Ovary (tissue), 10 donors: ENCODE measurements at regions of chr10 and their contacts with region 1.

Region 1: GRCh38 chr10:79463578-79464496 is 18.4 kb upstream of the ZCCHC24 start:
- DNase-seq: no peak
- H3K4me3 ChIP-seq: no peak overlapping the region
- H3K27ac ChIP-seq: no peak overlapping the region
- H3K4me1 ChIP-seq: peaks cover 3% of the 10 kb centered on the region
- H3K27me3 ChIP-seq: no peaks in the 10 kb centered on the region
- CTCF ChIP-seq: no peak
- EP300 ChIP-seq: no peak
- POLR2A ChIP-seq: no peak

Region 2: GRCh38 chr10:79242620-79243152 is 221.2 kb before region 1 on chr10:
- intact Hi-C with region 1: loop called in 1 of 4 experiments (anchors 10 kb)
- DNase-seq: peak; percentile 74 to 85 (median 77)
- H3K4me3 ChIP-seq: peak overlapping the region; percentile 39
- H3K27ac ChIP-seq: peak overlapping the region; percentile 42 to 74
- H3K4me1 ChIP-seq: peaks cover 42% of the 10 kb centered on the region
- H3K27me3 ChIP-seq: no peaks in the 10 kb centered on the region
- CTCF ChIP-seq: no peak
- EP300 ChIP-seq: no peak
- POLR2A ChIP-seq: no peak

Region 3: DNA sequence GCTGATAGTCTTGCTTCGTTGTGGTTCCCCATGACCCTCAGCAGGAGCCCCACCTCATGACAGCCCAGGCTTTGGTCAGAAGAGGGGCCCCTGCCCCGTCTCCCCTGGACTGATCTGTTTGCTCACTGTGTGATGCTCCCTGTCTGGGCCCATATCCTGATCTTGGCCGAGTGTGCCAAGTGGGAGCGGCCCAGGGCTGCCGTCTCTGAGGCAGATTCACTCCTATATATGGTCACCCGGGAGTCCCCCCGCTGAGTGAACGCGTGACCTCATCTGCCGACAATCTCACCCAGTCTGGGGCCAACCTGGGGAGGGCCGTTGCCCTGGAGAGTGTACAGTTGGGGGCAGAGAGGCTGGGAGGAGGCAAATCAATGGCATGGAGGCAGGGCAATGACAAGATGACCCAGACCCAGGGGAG is 82.0 kb before region 1 on chr10:
- intact Hi-C with region 1: loop called in 3 of 4 experiments (anchors 5 kb)
- DNase-seq: peak; percentile 54 to 80 (median 61)
- H3K4me3 ChIP-seq: no peak overlapping the region
- H3K27ac ChIP-seq: peak overlapping the region in 1 of 2 donors; percentile 53
- H3K4me1 ChIP-seq: peaks cover 30% of the 10 kb centered on the region
- H3K27me3 ChIP-seq: no peaks in the 10 kb centered on the region
- CTCF ChIP-seq: no peak
- EP300 ChIP-seq: no peak
- POLR2A ChIP-seq: no peak